Endothelial cell of umbilical vein (primary cell): ENCODE measurements at regions of chr3 and their contacts with region 1.

Region 1: DNA sequence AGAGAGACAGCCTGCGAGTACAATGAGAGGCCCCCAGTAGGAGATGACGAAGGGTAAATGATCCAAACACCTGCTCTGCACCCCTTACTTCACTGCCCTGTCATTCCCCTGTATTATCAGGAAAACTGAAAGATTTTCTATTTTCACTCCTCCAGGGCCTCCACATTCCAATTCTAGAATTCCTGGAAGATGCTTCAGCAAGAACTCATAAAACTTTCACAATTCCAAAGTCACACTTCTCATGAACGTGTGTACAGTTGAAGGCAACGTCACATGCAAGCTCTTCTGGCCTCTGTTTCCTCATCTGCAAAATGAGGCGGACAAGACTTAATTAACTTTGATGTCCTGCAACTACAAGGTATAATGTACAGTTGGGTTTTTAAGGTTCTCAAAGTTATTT is 62.8 kb upstream of the SPATA12 start:
- DNase-seq: no peak
- H3K4me3 ChIP-seq: no peak overlapping the region
- H3K27ac ChIP-seq: no peak overlapping the region
- H3K4me1 ChIP-seq: peaks cover 3% of the 10 kb centered on the region
- H3K27me3 ChIP-seq: no peaks in the 10 kb centered on the region
- CTCF ChIP-seq: no peak
- POLR2A ChIP-seq: no peak

Region 2: GRCh38 chr3:56702490-56703315 is 295.0 kb before region 1 on chr3:
- CTCF ChIA-PET with region 1: interaction called, 15 read pairs
- POLR2A ChIA-PET with region 1: no interaction called
- dilution Hi-C with region 1: no loop called
- intact Hi-C with region 1: no loop called
- DNase-seq: peak; percentile 66
- H3K4me3 ChIP-seq: no peak overlapping the region
- H3K27ac ChIP-seq: no peak overlapping the region
- H3K4me1 ChIP-seq: no peaks in the 10 kb centered on the region
- H3K27me3 ChIP-seq: no peaks in the 10 kb centered on the region
- CTCF ChIP-seq: peak; percentile 56 to 61
- POLR2A ChIP-seq: no peak

Region 3: GRCh38 chr3:57025237-57025636 is 27.6 kb after region 1 on chr3:
- CTCF ChIA-PET with region 1: no interaction called
- POLR2A ChIA-PET with region 1: no interaction called
- dilution Hi-C with region 1: no loop called
- intact Hi-C with region 1: no loop called
- DNase-seq: no peak
- H3K4me3 ChIP-seq: no peak overlapping the region
- H3K27ac ChIP-seq: no peak overlapping the region
- H3K4me1 ChIP-seq: no peaks in the 10 kb centered on the region
- H3K27me3 ChIP-seq: peaks cover 0 to 3% of the 10 kb centered on the region in 2 experiments
- CTCF ChIP-seq: no peak
- POLR2A ChIP-seq: no peak

Region 4: GRCh38 chr3:57078344-57078634 is 80.6 kb after region 1 on chr3:
- CTCF ChIA-PET with region 1: interaction called, 10 read pairs
- POLR2A ChIA-PET with region 1: no interaction called
- dilution Hi-C with region 1: no loop called
- intact Hi-C with region 1: loop called (anchors 2 kb)
- DNase-seq: peak; percentile 45
- H3K4me3 ChIP-seq: peak overlapping the region in 2 of 3 experiments; percentile 63 to 65
- H3K27ac ChIP-seq: no peak overlapping the region
- H3K4me1 ChIP-seq: peaks cover 22% of the 10 kb centered on the region
- H3K27me3 ChIP-seq: peaks cover 2 to 3% of the 10 kb centered on the region in 2 experiments
- CTCF ChIP-seq: no peak
- POLR2A ChIP-seq: no peak

Region 5: GRCh38 chr3:57100046-57100695 is 102.5 kb after region 1 on chr3:
- CTCF ChIA-PET with region 1: interaction called, 17 read pairs
- POLR2A ChIA-PET with region 1: no interaction called
- dilution Hi-C with region 1: no loop called
- intact Hi-C with region 1: loop called (anchors 5 kb)
- DNase-seq: peak; percentile 83
- H3K4me3 ChIP-seq: no peak overlapping the region
- H3K27ac ChIP-seq: no peak overlapping the region
- H3K4me1 ChIP-seq: peaks cover 6% of the 10 kb centered on the region
- H3K27me3 ChIP-seq: no peaks in the 10 kb centered on the region
- CTCF ChIP-seq: peak; percentile 77 to 80
- POLR2A ChIP-seq: no peak

Region 6: GRCh38 chr3:57227204-57227929 is 229.7 kb after region 1 on chr3 and contains the start of gene APPL1:
- CTCF ChIA-PET with region 1: interaction called, 5 read pairs
- POLR2A ChIA-PET with region 1: no interaction called
- dilution Hi-C with region 1: no loop called
- intact Hi-C with region 1: loop called (anchors 2 kb)
- DNase-seq: peak; percentile 94
- H3K4me3 ChIP-seq: peak within 1 kb of the TSS; percentile 85 to 98 (median 88)
- H3K27ac ChIP-seq: peak within 1 kb of the TSS; percentile 75
- H3K4me1 ChIP-seq: peaks cover 18% of the 10 kb centered on the region
- H3K27me3 ChIP-seq: no peaks in the 10 kb centered on the region
- CTCF ChIP-seq: no peak
- POLR2A ChIP-seq: peak; percentile 84
- total RNA-seq, gene APPL1: 28.8 and 29.7 TPM in 2 replicates

Region 7: GRCh38 chr3:57298041-57298440 is 300.4 kb after region 1 on chr3:
- CTCF ChIA-PET with region 1: no interaction called
- POLR2A ChIA-PET with region 1: no interaction called
- dilution Hi-C with region 1: no loop called
- intact Hi-C with region 1: no loop called
- DNase-seq: no peak
- H3K4me3 ChIP-seq: no peak overlapping the region
- H3K27ac ChIP-seq: no peak overlapping the region
- H3K4me1 ChIP-seq: no peaks in the 10 kb centered on the region
- H3K27me3 ChIP-seq: peaks cover 0 to 3% of the 10 kb centered on the region in 2 experiments
- CTCF ChIP-seq: no peak
- POLR2A ChIP-seq: no peak